CD8-positive, alpha-beta T cell (primary cell): ENCODE measurements at regions of chr5 and their contacts with region 1.

Region 1: GRCh38 chr5:172714491-172715421 is 56.2 kb downstream of the DUSP1 start:
- DNase-seq: peak; percentile 43 to 82 (median 73)
- ATAC-seq: peak; percentile 79
- H3K4me3 ChIP-seq: no peak overlapping the region
- H3K4me3 Mint-ChIP-seq: no peak overlapping the region
- H3K27ac ChIP-seq: no peak overlapping the region
- H3K27ac Mint-ChIP-seq: no peak overlapping the region
- H3K4me1 ChIP-seq: peaks cover 13% of the 10 kb centered on the region
- H3K4me1 Mint-ChIP-seq: peaks cover 13% of the 10 kb centered on the region
- H3K27me3 ChIP-seq: peaks cover 0 to 6% of the 10 kb centered on the region in 2 experiments
- H3K27me3 Mint-ChIP-seq: peaks cover 10% of the 10 kb centered on the region
- CTCF ChIP-seq: peak; percentile 82

Region 2: GRCh38 chr5:172697123-172698121 is 17.3 kb before region 1 on chr5:
- CTCF ChIA-PET with region 1: interaction called, 22 read pairs
- POLR2A ChIA-PET with region 1: interaction called, 4 read pairs
- intact Hi-C with region 1: no loop called
- DNase-seq: peak; percentile 67 to 92 (median 84)
- ATAC-seq: peak; percentile 98
- H3K4me3 ChIP-seq: peak overlapping the region; percentile 64 to 90
- H3K4me3 Mint-ChIP-seq: peak overlapping the region; percentile 93
- H3K27ac ChIP-seq: peak overlapping the region; percentile 43 to 81
- H3K27ac Mint-ChIP-seq: peak overlapping the region; percentile 92
- H3K4me1 ChIP-seq: peaks cover 10% of the 10 kb centered on the region
- H3K4me1 Mint-ChIP-seq: peaks cover 22% of the 10 kb centered on the region
- H3K27me3 ChIP-seq: peaks cover 0 to 3% of the 10 kb centered on the region in 2 experiments
- H3K27me3 Mint-ChIP-seq: peaks cover 16% of the 10 kb centered on the region
- CTCF ChIP-seq: peak; percentile 81

Region 3: DNA sequence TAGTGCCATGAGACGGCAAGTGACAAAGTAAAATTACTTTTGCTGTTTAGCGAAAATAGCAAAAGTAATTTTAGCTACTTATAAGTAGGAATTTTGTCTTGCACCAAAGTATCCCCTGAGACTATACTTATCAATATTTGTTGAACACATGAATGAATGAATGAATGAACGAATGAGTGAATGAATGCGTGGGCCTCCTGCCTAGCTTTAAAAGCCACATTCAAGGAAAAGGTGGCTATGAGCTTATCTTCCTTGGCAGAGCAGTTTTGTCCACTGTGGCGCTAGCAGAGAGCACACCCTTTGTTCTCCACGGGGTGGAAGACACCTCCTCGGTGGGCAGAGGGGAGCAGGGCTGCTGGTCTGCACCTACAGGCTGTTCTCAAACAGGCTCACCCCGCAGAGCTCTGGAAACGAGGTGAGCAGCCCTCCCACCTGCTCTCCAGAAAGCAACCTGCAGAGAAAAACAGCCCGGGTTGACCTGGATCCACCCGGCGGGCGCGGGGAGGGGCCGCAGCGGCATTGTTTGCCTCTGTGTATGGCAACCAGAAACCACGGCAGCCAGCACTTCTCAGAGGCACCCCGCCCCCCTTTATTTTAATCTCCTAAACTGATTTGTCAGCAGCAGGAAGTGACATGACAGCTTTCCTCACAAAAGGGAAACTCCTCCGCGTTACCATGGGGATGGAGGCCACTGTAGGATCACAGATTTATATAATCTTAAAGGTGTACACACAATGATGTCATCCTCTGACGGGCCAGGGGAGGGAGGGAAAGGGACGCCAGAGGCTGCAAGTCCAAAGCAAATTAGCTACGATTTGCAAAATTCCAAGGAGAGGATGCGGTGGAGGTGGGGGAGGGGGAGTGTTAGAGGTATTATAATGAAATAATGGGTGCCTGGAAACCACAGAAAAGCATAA is 50.4 kb after region 1 on chr5:
- CTCF ChIA-PET with region 1: interaction called, 70 read pairs
- POLR2A ChIA-PET with region 1: interaction called, 26 read pairs
- intact Hi-C with region 1: loop called (anchors 1 to 2 kb)
- DNase-seq: peak; percentile 88 to 100 (median 96)
- ATAC-seq: peak; percentile 77
- H3K4me3 ChIP-seq: peak overlapping the region; percentile 41 to 48
- H3K4me3 Mint-ChIP-seq: peak overlapping the region; percentile 81
- H3K27ac ChIP-seq: peak overlapping the region; percentile 86 to 89
- H3K27ac Mint-ChIP-seq: peak overlapping the region; percentile 96
- H3K4me1 ChIP-seq: peaks cover 33% of the 10 kb centered on the region
- H3K4me1 Mint-ChIP-seq: peaks cover 52% of the 10 kb centered on the region
- H3K27me3 ChIP-seq: no peaks in the 10 kb centered on the region
- H3K27me3 Mint-ChIP-seq: no peaks in the 10 kb centered on the region
- CTCF ChIP-seq: no peak

Region 4: GRCh38 chr5:172833686-172834414 is 119.1 kb after region 1 on chr5 and contains the start of gene ERGIC1:
- CTCF ChIA-PET with region 1: interaction called, 4 read pairs
- POLR2A ChIA-PET with region 1: no interaction called
- intact Hi-C with region 1: loop called (anchors 2 to 5 kb)
- DNase-seq: peak in 8 of 9 experiments; percentile 58 to 84 (median 72)
- ATAC-seq: peak; percentile 74
- H3K4me3 ChIP-seq: peak within 1 kb of the TSS; percentile 67 to 81
- H3K4me3 Mint-ChIP-seq: peak within 1 kb of the TSS; percentile 86
- H3K27ac ChIP-seq: peak within 1 kb of the TSS; percentile 67 to 88
- H3K27ac Mint-ChIP-seq: peak within 1 kb of the TSS; percentile 92
- H3K4me1 ChIP-seq: peaks cover 44% of the 10 kb centered on the region
- H3K4me1 Mint-ChIP-seq: peaks cover 44% of the 10 kb centered on the region
- H3K27me3 ChIP-seq: no peaks in the 10 kb centered on the region
- H3K27me3 Mint-ChIP-seq: no peaks in the 10 kb centered on the region
- CTCF ChIP-seq: no peak
- total RNA-seq, gene ERGIC1: 61.0 to 61.2 TPM

Region 5: DNA sequence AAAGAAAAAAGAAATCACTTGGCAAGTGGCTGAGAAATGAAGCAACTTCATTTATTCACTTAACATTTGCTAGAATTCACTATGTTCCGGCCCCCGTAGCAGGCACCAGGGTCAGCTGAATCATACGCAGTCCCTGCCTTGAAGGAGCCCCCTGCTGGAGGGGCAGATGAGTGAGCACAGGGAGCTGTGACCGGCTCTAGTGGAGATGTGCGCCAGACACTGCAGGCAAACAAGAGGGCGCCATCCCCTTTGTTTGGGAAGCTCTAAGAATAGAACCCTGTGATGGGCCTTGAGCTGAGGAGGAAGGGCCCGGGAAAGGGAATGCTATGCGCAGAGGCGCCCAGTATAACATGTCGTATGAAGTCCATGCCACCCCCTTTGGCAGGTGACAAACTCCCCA is 224.3 kb after region 1 on chr5:
- CTCF ChIA-PET with region 1: interaction called, 436 read pairs
- POLR2A ChIA-PET with region 1: no interaction called
- intact Hi-C with region 1: no loop called
- DNase-seq: peak in 1 of 9 experiments; percentile 23
- ATAC-seq: no peak
- H3K4me3 ChIP-seq: no peak overlapping the region
- H3K4me3 Mint-ChIP-seq: no peak overlapping the region
- H3K27ac ChIP-seq: no peak overlapping the region
- H3K27ac Mint-ChIP-seq: no peak overlapping the region
- H3K4me1 ChIP-seq: no peaks in the 10 kb centered on the region
- H3K4me1 Mint-ChIP-seq: no peaks in the 10 kb centered on the region
- H3K27me3 ChIP-seq: no peaks in the 10 kb centered on the region
- H3K27me3 Mint-ChIP-seq: no peaks in the 10 kb centered on the region
- CTCF ChIP-seq: no peak

Region 6: GRCh38 chr5:173144200-173145176 is 429.7 kb after region 1 on chr5 and contains the start of gene BNIP1:
- CTCF ChIA-PET with region 1: no interaction called
- POLR2A ChIA-PET with region 1: no interaction called
- intact Hi-C with region 1: loop called in 1 of 2 experiments (anchors 10 kb)
- DNase-seq: peak; percentile 91 to 98 (median 97)
- ATAC-seq: peak; percentile 94
- H3K4me3 ChIP-seq: peak within 1 kb of the TSS; percentile 74 to 99
- H3K4me3 Mint-ChIP-seq: peak within 1 kb of the TSS; percentile 99
- H3K27ac ChIP-seq: peak within 1 kb of the TSS; percentile 95 to 98
- H3K27ac Mint-ChIP-seq: peak within 1 kb of the TSS; percentile 99
- H3K4me1 ChIP-seq: peaks cover 10% of the 10 kb centered on the region
- H3K4me1 Mint-ChIP-seq: peaks cover 11% of the 10 kb centered on the region
- H3K27me3 ChIP-seq: no peaks in the 10 kb centered on the region
- H3K27me3 Mint-ChIP-seq: no peaks in the 10 kb centered on the region
- CTCF ChIP-seq: peak; percentile 68
- total RNA-seq, gene BNIP1: 22.7 to 24.0 TPM

Region 7: DNA sequence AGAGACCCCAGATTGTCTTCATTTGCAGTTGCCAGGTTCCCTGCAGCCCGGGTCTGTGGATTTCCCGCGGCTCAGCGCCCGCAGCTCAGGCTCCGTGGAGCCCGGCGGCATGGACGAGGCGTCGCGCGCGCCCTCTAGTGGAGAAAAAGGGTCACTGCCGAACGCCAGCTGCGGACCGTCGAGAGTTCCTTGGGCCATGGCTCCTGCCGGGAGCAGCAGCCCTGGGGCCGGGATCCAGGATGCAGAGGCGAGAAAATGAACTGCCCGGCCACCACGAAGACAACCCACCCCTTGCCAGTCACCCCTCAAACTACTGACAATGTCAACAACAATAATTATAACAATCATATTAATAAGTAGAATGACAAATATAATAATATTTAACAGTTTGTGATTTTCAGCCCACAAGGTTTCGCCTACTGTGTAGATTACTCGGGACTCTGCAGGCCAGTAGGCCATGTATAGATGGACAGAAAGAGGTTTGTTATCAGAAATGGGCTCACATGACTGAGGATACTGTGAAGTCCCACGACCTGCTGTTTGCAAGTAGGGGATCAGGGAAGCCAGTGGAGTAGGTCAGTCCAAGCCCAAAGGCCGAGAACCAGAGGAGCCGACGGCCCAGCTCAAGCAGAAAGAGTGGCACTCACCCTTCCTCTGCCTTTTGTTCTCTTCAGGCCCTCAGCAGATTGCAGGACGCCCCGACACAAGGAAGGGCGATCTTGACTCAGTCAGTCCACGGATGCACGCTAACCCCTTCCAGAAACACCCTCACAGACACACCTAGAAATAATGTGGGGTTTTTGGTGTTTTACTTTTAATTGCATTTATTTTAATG is 858.6 kb after region 1 on chr5:
- CTCF ChIA-PET with region 1: no interaction called
- POLR2A ChIA-PET with region 1: no interaction called
- intact Hi-C with region 1: loop called in 1 of 2 experiments (anchors 10 kb)
- DNase-seq: peak; percentile 39 to 78 (median 64)
- ATAC-seq: peak; percentile 48
- H3K4me3 ChIP-seq: no peak overlapping the region
- H3K4me3 Mint-ChIP-seq: no peak overlapping the region
- H3K27ac ChIP-seq: no peak overlapping the region
- H3K27ac Mint-ChIP-seq: no peak overlapping the region
- H3K4me1 ChIP-seq: peaks cover 4% of the 10 kb centered on the region
- H3K4me1 Mint-ChIP-seq: peaks cover 7% of the 10 kb centered on the region
- H3K27me3 ChIP-seq: peaks cover 5 to 6% of the 10 kb centered on the region in 2 experiments
- H3K27me3 Mint-ChIP-seq: peaks cover 26% of the 10 kb centered on the region
- CTCF ChIP-seq: peak; percentile 94